Dorsolateral prefrontal cortex (tissue), 120 donors: ENCODE measurements at regions of chr1 and their contacts with region 1.

Region 1: DNA sequence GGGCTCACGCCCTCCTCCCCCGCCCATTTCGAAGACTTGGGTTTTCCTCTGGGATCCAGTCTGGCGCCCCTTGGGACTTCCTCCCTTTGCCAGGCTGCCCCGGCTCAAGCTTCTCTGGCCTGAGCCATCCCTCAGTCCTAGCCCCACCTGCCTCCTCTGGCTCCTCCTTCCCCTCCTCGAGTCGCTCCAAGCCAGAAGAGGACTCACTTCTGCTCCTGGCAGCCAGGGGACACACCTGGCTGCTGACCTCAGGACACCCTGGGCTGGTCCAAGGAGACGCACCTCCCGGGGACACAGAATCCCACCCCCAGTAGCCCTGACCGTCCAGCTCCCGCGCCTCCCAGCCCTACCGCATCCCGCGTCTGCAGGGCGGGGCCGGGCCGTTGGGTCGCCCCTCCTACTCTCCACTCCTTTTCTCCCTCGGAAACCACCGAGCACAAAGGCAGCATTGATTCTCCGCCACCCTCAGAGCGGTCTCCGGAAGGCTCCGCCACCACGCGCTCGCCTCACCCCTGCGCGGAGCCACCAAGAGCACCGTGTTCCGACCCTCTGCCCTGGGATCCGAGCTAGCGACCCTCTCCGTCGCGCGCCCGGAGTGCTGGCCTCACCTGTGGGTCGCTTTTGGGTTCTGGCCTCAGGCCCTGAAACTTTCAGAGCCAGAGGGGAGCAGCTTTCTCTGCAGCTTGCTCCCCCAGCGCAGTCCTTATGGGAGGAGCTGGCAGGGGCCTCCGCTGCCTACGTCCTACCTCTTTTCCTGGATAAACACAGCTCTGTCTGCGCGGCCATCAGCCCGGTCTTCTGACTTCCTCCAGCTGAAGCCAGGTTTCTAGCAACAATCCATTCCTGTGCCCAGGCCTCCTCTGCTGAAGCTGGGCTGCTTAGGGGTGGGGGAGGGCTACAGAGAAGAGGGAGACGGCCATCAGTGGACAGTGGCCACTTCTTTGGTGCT is at the start of gene C2CD4D:
- DNase-seq: peak; percentile 66 to 87 (median 84)
- H3K4me3 ChIP-seq: peak within 1 kb of the TSS; percentile 34 to 80 (median 62)
- H3K27ac ChIP-seq: peak within 1 kb of the TSS; percentile 66 to 99 (median 96)
- H3K27me3 ChIP-seq: peaks cover 0 to 18% (median 0%) of the 10 kb centered on the region in 45 donors
- CTCF ChIP-seq: peak in 20 of 56 donors; percentile 1 to 48 (median 20)
- total RNA-seq, gene C2CD4D: 0.56 to 4.3 (median 1.4) TPM

Region 2: DNA sequence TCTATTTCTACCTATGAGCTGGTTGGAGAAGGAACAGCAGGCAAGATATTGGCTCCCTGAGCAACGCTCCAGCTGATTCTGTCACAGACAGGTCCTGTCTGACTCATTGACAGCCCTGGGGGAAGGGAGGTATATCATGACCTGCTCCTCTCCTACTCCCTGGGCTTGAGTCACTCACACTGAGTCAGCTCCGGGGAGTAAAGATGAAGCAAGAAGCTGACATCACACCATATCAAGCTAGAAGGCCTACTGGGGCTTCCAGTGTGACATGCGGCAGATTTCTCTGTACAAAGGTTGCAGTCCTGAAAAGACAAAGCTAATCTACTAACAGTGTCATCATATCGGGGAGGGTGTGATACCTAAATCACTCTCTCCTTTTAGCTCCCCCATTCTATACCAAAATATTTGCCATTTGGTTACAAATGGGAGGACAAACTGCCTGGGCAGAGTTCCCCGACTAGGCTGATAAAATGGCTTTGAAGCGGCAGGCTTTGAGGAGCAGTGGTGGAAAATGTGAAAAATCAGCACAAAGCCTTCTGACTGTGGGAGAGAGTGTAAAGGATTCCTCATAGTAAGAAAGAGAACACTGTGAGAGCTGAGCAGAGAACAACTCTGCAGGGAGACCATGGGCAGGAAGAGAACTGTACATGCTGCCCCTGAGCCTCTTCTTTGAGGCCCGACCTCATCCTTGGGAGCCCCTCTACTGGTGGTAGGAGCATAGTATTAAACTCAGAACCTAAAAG is 528.0 kb before region 1 on chr1:
- intact Hi-C with region 1: loop called in 1 of 2 experiments (anchors 5 kb)
- DNase-seq: peak in 7 of 10 donors; percentile 35 to 89 (median 78)
- H3K4me3 ChIP-seq: peak overlapping the region in 8 of 59 donors; percentile 4 to 31 (median 14)
- H3K27ac ChIP-seq: peak overlapping the region in 58 of 59 donors; percentile 11 to 99 (median 94)
- H3K27me3 ChIP-seq: no peaks in the 10 kb centered on the region
- CTCF ChIP-seq: no peak

Region 3: DNA sequence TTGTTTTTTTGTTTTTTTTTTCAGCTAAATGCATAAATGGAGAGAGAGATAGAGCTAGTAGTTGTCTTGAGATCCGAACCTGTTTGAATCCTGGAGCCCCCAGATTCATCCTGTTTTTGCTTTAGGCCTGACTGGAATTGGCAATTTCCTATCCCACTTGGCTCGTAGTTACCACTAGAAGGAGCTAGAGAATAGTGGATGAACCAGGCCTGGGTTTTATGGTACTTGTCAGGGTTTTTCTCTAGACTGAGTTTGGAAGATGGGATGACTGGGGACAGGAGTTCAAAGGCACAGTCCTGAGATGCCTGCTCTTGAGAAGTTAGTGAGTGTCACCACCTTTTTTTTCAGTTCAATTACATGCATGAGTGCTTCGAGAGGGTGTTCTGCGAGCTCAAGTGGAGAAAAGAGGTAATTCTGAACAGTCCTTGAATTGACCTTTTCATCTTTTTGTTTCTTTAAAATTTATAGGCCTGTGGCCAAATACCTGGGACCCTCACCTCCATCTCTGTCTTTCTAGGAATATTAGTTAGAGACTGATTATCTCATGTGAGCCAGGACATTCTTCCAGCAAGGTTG is 146.6 kb before region 1 on chr1:
- intact Hi-C with region 1: loop called in 1 of 2 experiments (anchors 2 kb)
- DNase-seq: no peak
- H3K4me3 ChIP-seq: no peak overlapping the region
- H3K27ac ChIP-seq: peak overlapping the region in 21 of 59 donors; percentile 3 to 50 (median 19)
- H3K27me3 ChIP-seq: no peaks in the 10 kb centered on the region
- CTCF ChIP-seq: peak; percentile 18 to 75 (median 62)

Region 4: DNA sequence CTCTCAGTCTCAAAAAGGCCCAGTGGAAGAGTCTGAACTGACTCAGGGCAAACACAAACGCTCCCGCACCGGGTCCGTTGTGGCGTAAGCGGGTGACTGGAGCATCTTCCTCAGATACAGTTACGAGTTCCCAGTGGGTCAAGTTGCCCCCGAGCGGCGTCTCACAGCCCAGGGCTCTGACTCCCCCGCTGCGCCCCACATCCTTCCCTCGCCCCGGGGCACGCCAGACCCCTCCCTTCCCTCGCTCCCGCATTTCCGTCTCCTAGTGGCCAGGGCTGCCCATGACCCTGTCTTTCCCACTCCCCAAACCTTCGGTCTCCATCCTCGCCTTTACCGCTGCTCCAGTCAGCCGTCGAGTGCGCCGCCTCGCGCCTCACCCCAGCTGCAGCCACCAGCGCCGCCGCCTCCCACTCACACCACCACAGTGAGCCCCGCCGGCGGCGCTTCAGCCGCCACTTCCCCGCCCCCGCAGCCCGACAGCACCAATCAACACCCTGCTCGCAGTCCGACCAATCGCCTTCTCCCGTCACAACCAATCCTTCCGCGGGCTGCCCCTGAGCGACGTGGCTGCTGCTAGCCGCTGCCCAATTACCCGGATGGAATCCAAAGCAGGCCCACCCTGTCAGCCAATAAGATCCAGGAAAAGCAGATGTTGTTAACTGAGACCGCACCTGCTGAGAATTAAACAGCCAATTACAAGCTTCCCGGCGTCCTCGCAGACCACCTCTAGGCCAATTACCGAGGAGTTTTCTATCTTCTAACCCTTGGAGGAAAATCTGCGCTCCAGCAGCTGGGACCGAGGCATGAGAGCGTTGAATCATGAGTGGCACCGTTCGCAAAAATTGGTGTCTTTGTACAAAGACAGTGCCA is 49.4 kb before region 1 on chr1 and contains the start of gene TDRKH:
- intact Hi-C with region 1: loop called (anchors 1 to 2 kb)
- DNase-seq: peak; percentile 93 to 99 (median 98)
- H3K4me3 ChIP-seq: peak within 1 kb of the TSS; percentile 54 to 98 (median 87)
- H3K27ac ChIP-seq: peak within 1 kb of the TSS; percentile 16 to 93 (median 81)
- H3K27me3 ChIP-seq: no peaks in the 10 kb centered on the region
- CTCF ChIP-seq: peak in 48 of 56 donors; percentile 8 to 68 (median 46)
- total RNA-seq, gene TDRKH: 16.1 to 39.5 (median 28.5) TPM

Region 5: GRCh38 chr1:151909150-151910149 is 69.7 kb after region 1 on chr1 and contains the start of gene THEM4:
- intact Hi-C with region 1: loop called in 1 of 2 experiments (anchors 2 kb)
- DNase-seq: peak; percentile 87 to 98 (median 94)
- H3K4me3 ChIP-seq: peak within 1 kb of the TSS; percentile 55 to 93 (median 78)
- H3K27ac ChIP-seq: peak within 1 kb of the TSS; percentile 40 to 92 (median 80)
- H3K27me3 ChIP-seq: no peaks in the 10 kb centered on the region
- CTCF ChIP-seq: peak in 51 of 56 donors; percentile 7 to 72 (median 46)
- total RNA-seq, gene THEM4: 13.3 to 34.9 (median 24.2) TPM